ENCODE measurements at regions of chr22 and their contacts with region 1.

Region 1: DNA sequence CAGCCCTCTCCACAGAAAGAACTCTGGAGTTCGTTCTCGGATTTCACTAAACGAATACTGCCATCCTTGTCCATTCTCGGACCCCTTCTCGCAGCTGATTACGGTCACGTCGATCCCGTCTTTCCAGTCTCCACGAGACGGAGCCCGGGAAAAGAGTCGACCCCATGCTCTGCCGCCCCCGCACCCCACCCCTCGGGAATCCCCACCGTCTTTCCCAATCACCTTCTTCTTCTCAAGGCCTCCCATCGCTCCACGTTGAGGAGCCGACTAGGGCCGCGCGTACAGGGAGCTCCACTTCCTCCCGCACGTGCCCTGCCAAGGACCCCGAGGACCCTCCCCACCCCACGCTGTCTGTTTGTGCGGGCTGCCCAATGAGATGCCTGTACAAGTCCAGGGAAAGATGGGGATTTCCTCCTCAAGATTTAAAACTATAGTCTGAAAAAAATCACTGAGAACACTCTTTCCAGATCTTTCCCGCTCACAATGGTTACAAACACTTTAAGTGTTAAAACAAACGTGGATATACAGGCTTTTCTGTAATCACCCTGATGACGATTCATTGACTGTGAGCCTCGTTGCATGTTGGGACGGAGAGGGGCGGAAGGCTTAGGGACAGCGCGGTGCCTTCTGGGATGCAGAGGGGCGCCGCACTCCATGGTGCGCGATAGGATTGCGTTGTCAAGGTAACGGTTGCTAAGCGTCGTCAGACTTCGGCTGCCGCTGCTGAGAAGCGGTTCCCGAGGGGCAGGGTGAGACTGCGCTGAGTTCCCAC is at the start of gene PES1:
- DNase-seq: peak; percentile 99
- ATAC-seq: peak; percentile 94
- H3K4me3 ChIP-seq: peak within 1 kb of the TSS; percentile 81 to 95 (median 91)
- H3K4me3 Mint-ChIP-seq: no peak within 1 kb of the TSS
- H3K27ac ChIP-seq: peak within 1 kb of the TSS; percentile 95 to 98
- H3K27ac Mint-ChIP-seq: no peak within 1 kb of the TSS
- H3K4me1 ChIP-seq: peaks cover 14 to 22% of the 10 kb centered on the region in 2 donors
- H3K4me1 Mint-ChIP-seq: no peaks in the 10 kb centered on the region
- H3K27me3 ChIP-seq: peaks cover 0 to 2% (median under 1%) of the 10 kb centered on the region in 4 experiments
- H3K27me3 Mint-ChIP-seq: peaks cover 3% of the 10 kb centered on the region
- CTCF ChIP-seq: no peak
- total RNA-seq, gene PES1: 72.7 and 75.2 TPM in 2 replicates

Region 2: DNA sequence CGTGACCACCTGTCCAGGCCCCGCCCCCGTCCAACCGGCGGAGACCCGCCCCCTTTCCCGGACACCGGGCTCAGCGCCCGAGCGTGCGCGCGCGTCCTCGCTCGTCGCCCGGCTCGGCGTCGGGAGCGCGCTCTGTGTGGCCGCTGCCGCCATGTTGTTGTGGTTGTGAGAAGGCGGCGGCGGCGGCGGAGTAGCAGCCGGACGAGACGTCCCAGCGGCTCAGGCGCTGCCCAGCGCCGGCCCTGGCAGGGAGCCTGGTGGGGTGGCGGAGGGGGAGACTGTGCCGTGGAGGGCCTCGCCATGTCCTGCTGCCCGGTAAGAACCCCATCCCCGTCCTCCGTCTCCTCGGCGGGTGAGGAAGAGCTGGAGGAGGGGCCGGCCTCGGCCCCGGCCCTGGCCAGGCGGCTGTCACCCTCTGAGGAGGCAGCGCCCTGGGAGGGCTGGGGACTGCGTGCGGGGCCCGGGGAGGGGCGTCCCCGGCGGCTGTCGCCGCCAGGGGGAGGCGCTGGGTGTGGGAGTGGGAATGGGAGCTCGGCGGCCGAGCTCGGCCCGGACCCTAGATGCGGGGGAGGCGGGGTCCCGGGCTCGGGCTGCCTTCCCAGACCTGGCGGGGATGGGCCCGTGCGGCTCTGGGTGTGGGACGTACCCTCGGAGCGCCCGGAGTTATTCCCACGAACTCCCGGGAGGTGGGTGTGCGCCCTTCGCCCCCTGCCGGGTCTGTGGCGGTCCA is 708.6 kb before region 1 on chr22 and contains the start of gene MTMR3:
- CTCF ChIA-PET with region 1: no interaction called
- POLR2A ChIA-PET with region 1: no interaction called
- intact Hi-C with region 1: loop called (anchors 5 kb)
- DNase-seq: peak; percentile 94
- ATAC-seq: peak; percentile 80
- H3K4me3 ChIP-seq: peak within 1 kb of the TSS; percentile 76 to 99 (median 87)
- H3K4me3 Mint-ChIP-seq: peak within 1 kb of the TSS; percentile 92
- H3K27ac ChIP-seq: peak within 1 kb of the TSS; percentile 71 to 91
- H3K27ac Mint-ChIP-seq: peak within 1 kb of the TSS; percentile 86
- H3K4me1 ChIP-seq: peaks cover 21% of the 10 kb centered on the region in 2 donors
- H3K4me1 Mint-ChIP-seq: peaks cover 12% of the 10 kb centered on the region
- H3K27me3 ChIP-seq: no peaks in the 10 kb centered on the region
- H3K27me3 Mint-ChIP-seq: no peaks in the 10 kb centered on the region
- CTCF ChIP-seq: peak; percentile 47
- total RNA-seq, gene MTMR3: 67.8 and 76.5 TPM in 2 replicates

Region 3: DNA sequence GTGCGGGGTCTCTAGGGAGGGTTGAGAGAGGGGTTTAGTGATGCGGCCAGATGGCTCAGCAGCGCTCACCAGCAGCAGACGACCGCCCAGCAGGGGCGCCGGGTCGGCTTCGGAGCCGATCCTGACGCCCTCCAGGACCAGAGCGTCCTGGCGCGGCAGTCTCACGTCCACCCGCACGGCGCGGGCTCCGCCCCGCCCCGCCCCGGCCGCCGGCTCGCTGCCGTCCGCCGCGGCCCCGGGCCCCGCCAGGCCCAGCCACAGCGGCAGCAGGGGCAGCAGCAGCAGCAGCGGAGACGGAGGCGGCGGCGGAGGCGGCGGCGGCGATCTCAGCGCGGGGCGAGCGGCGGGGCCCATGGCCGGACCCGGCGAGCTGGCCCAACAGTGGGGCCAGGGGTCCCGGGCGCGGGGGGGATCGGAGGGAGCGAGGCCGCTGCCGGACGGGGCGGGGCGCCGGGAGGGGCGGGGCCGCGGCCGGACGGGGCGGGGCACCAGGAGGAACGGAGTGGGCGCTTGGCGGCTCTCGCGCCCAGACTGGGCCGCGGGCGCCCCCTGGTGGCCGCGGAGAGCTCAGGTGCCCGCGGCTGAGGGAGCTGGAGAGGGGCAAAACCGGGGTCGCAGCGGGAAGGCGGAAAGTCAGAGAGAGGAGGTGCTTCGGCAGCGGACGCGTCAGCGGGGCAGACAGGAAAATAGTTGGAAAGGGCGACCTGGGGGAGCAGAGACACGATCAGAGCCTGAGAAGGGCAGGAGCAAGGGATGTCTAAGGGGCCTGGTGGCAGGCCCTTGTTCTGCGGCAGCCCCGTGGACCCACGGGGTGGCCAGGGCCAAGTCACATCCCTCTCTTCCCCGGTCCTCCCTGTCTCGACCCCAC is 204.6 kb before region 1 on chr22 and contains the start of gene RNF215:
- CTCF ChIA-PET with region 1: interaction called, 3 read pairs
- POLR2A ChIA-PET with region 1: no interaction called
- intact Hi-C with region 1: loop called (anchors 10 kb)
- DNase-seq: peak; percentile 90
- ATAC-seq: peak; percentile 88
- H3K4me3 ChIP-seq: peak within 1 kb of the TSS in 4 of 5 experiments; percentile 25 to 61 (median 42)
- H3K4me3 Mint-ChIP-seq: peak within 1 kb of the TSS; percentile 83
- H3K27ac ChIP-seq: no peak within 1 kb of the TSS
- H3K27ac Mint-ChIP-seq: peak within 1 kb of the TSS; percentile 54
- H3K4me1 ChIP-seq: peaks cover 14 to 20% of the 10 kb centered on the region in 2 donors
- H3K4me1 Mint-ChIP-seq: peaks cover 21% of the 10 kb centered on the region
- H3K27me3 ChIP-seq: no peaks in the 10 kb centered on the region
- H3K27me3 Mint-ChIP-seq: no peaks in the 10 kb centered on the region
- CTCF ChIP-seq: peak; percentile 84
- total RNA-seq, gene RNF215: 16.7 and 18.6 TPM in 2 replicates

Region 4: DNA sequence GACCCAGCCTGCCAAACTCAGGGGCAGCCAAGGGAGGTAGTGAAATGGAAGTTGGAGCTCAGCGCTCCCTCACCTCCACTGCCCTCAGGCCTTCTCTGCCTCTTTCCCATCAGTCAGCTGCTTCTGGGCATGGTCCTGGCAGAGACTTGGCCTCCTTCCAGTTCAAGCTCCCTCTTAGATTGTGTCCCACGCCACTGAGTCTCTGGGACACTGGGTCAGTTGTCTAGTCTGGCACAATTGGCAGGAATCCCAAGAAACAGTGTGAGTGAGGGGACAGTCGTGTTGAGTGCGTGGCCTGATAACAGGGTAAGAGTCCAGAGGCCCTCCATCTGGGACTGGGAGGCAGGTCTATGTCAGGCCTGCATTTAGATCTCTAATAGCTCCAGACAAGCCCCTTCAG is 36.7 kb after region 1 on chr22:
- CTCF ChIA-PET with region 1: no interaction called
- POLR2A ChIA-PET with region 1: no interaction called
- intact Hi-C with region 1: no loop called
- DNase-seq: no peak
- ATAC-seq: no peak
- H3K4me3 ChIP-seq: no peak overlapping the region
- H3K4me3 Mint-ChIP-seq: no peak overlapping the region
- H3K27ac ChIP-seq: no peak overlapping the region
- H3K27ac Mint-ChIP-seq: no peak overlapping the region
- H3K4me1 ChIP-seq: no peaks in the 10 kb centered on the region
- H3K4me1 Mint-ChIP-seq: no peaks in the 10 kb centered on the region
- H3K27me3 ChIP-seq: no peaks in the 10 kb centered on the region
- H3K27me3 Mint-ChIP-seq: no peaks in the 10 kb centered on the region
- CTCF ChIP-seq: no peak

Region 5: GRCh38 chr22:30667494-30668385 is 76.0 kb after region 1 on chr22 and contains the start of gene DUSP18:
- CTCF ChIA-PET with region 1: no interaction called
- POLR2A ChIA-PET with region 1: no interaction called
- intact Hi-C with region 1: loop called (anchors 1 kb)
- DNase-seq: peak; percentile 96
- ATAC-seq: peak; percentile 93
- H3K4me3 ChIP-seq: peak within 1 kb of the TSS; percentile 81 to 93 (median 86)
- H3K4me3 Mint-ChIP-seq: peak within 1 kb of the TSS; percentile 98
- H3K27ac ChIP-seq: peak within 1 kb of the TSS; percentile 18 to 53
- H3K27ac Mint-ChIP-seq: peak within 1 kb of the TSS; percentile 92
- H3K4me1 ChIP-seq: peaks cover 12 to 17% of the 10 kb centered on the region in 2 donors
- H3K4me1 Mint-ChIP-seq: peaks cover 21% of the 10 kb centered on the region
- H3K27me3 ChIP-seq: peaks cover 0 to 6% (median 0%) of the 10 kb centered on the region in 4 experiments
- H3K27me3 Mint-ChIP-seq: no peaks in the 10 kb centered on the region
- CTCF ChIP-seq: peak; percentile 41
- total RNA-seq, gene DUSP18: 18.7 and 20.6 TPM in 2 replicates

Region 6: DNA sequence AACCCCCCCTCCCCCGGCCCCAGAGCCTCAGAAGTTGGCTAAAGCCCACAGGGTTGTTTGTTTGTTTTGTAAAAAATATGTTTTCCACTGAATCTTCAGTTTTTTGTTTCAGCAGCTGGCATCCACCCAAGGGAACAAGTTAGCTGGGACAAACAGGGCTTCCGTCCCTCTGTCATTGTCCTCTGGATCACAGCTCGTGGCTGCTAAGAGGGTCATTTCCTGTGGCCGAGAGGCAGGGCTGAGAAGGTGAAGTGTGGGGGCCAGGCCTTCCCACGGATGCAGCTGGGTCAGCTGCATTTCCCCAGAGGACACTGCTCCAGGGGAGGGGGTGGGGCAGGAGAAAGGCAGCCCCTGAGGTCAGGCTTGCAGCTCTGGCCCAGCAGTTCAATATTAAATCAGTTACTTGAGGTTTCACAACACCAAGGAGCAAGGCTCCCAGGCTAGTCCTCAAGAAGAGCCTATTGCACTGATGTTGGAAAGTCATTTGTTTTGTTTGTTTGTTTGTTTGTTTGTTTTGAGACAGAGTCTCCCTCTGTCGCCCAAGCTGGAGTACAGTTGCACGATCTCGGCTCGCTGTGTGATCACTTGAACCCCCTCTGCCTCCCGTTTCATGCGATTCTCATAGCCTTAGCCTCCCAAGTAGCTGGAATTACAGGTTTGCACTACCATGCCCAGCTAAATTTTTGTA is 454.9 kb after region 1 on chr22:
- CTCF ChIA-PET with region 1: no interaction called
- POLR2A ChIA-PET with region 1: interaction called, 10 read pairs
- intact Hi-C with region 1: no loop called
- DNase-seq: no peak
- ATAC-seq: no peak
- H3K4me3 ChIP-seq: no peak overlapping the region
- H3K4me3 Mint-ChIP-seq: no peak overlapping the region
- H3K27ac ChIP-seq: no peak overlapping the region
- H3K27ac Mint-ChIP-seq: no peak overlapping the region
- H3K4me1 ChIP-seq: no peaks in the 10 kb centered on the region
- H3K4me1 Mint-ChIP-seq: no peaks in the 10 kb centered on the region
- H3K27me3 ChIP-seq: no peaks in the 10 kb centered on the region
- H3K27me3 Mint-ChIP-seq: peaks cover 9% of the 10 kb centered on the region
- CTCF ChIP-seq: no peak

Region 7: GRCh38 chr22:31749636-31750364 is 1158.0 kb after region 1 on chr22 and contains the start of gene PRR14L:
- CTCF ChIA-PET with region 1: no interaction called
- POLR2A ChIA-PET with region 1: no interaction called
- intact Hi-C with region 1: loop called (anchors 5 kb)
- DNase-seq: peak; percentile 99
- ATAC-seq: peak; percentile 74
- H3K4me3 ChIP-seq: peak within 1 kb of the TSS; percentile 81 to 95 (median 83)
- H3K4me3 Mint-ChIP-seq: peak within 1 kb of the TSS; percentile 95
- H3K27ac ChIP-seq: peak within 1 kb of the TSS; percentile 72 to 93
- H3K27ac Mint-ChIP-seq: peak within 1 kb of the TSS; percentile 99
- H3K4me1 ChIP-seq: peaks cover 41 to 43% of the 10 kb centered on the region in 2 donors
- H3K4me1 Mint-ChIP-seq: peaks cover 52% of the 10 kb centered on the region
- H3K27me3 ChIP-seq: no peaks in the 10 kb centered on the region
- H3K27me3 Mint-ChIP-seq: no peaks in the 10 kb centered on the region
- CTCF ChIP-seq: peak; percentile 17
- total RNA-seq, gene PRR14L: 69.6 and 78.5 TPM in 2 replicates

Measured in B cell (primary cell).